Posterior cingulate gyrus (tissue), 11 donors: ENCODE measurements at regions of chr7 and their contacts with region 1.

Region 1: DNA sequence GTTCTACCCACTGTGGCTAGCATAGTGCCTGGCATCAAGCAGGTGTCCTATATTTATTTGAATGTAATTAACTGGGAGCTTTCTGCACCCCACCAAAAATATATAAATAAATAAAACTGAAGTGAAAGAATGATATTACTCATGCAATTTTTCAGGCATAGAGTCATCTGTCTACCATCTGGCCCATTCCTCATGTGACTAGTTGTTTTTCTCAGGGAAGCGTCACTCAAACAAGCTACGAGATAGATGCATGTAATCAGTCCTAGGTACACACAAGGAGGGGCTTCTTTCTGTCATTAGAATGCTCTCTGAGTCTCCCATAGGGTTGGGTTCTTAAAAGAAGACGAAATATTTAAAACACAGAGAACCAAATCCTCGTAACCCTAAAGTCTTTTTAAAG is 255.5 kb upstream of the KMT2E start:
- DNase-seq: no peak

Region 2: DNA sequence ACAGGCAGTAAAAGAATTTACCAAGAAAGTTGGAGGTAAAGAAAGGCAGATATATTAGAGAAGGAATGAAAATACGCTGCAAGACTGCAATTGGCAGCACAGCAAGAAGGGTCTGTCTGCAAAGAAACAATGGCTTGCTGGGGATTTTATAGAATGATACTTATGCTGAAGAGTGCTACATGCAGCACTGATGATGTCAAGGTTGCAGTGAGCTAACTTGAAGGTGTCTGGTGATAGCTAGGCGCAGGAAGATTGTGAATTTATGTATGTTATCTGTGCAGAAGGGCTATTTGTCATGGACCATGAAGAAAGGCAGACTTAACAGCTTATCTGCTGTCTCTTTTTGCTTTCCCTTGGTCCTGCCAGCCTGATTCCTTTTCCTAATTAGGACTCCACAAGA is 63.8 kb before region 1 on chr7:
- intact Hi-C with region 1: loop called (anchors 2 kb)
- DNase-seq: no peak

Region 3: DNA sequence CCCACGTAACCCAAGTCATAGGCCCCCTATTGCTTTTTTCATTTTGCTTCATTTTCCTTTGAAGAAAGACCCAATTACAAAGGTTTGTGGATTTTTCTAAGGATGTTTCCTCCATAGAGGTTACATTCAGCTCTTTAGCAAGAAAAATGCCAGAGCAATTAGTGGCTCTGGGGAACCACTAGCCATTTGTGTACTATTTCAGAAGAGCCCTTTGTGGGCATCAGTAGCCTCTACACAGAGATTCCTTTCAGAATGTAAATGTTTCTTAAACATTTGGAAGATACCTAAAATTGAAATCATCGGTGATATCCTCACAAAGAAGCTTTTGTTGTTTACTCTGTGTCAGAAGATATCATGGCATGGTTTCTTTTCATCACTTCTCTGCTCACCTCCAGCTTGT is 35.5 kb before region 1 on chr7:
- intact Hi-C with region 1: no loop called
- DNase-seq: no peak